GM10248 (cell line): ENCODE measurements at regions of chr1 and their contacts with region 1.

Region 1: DNA sequence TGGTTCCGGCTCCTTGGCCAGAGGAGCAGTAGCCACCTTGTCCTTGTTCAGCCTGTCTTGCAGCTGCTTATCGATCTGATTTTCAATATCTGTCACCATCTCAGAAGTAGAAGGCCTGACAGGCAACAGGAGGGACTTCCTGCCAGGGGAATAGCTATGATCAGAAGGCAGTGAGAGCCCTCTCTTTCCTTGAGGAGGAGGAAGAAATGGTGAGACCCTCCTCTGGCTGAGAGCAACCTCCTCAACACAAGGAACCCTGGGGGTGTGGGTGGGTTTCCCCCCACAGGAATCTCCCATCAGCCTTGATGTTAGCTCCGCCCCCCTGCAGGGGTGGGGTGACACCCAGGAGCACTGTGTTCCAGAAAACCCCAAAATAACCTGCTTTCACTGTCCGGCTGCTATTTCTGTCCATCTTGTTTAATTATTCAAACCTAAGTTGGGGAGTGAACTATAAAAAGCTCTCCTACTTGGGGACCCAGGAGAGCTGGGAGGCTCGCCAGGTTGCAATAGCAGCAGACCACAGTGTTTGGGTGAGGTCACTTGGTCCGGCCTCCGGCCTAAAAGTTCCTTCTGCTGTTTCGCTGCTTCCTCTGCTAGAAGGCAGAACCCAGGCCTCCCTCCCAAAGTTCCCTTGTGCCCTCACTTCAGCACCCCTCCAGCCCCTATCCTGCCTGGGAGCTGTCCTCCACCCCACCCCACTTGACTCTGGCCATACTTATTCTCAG is 7.8 kb upstream of the MEF2D start:
- DNase-seq: peak; percentile 70
- CTCF ChIP-seq: no peak

Region 2: GRCh38 chr1:156371553-156372264 is 136.6 kb before region 1 on chr1:
- CTCF ChIA-PET with region 1: no interaction called
- POLR2A ChIA-PET with region 1: no interaction called
- DNase-seq: no peak
- CTCF ChIP-seq: no peak

Region 3: GRCh38 chr1:156407344-156407743 is 101.0 kb before region 1 on chr1:
- CTCF ChIA-PET with region 1: no interaction called
- POLR2A ChIA-PET with region 1: no interaction called
- DNase-seq: no peak
- CTCF ChIP-seq: no peak

Region 4: DNA sequence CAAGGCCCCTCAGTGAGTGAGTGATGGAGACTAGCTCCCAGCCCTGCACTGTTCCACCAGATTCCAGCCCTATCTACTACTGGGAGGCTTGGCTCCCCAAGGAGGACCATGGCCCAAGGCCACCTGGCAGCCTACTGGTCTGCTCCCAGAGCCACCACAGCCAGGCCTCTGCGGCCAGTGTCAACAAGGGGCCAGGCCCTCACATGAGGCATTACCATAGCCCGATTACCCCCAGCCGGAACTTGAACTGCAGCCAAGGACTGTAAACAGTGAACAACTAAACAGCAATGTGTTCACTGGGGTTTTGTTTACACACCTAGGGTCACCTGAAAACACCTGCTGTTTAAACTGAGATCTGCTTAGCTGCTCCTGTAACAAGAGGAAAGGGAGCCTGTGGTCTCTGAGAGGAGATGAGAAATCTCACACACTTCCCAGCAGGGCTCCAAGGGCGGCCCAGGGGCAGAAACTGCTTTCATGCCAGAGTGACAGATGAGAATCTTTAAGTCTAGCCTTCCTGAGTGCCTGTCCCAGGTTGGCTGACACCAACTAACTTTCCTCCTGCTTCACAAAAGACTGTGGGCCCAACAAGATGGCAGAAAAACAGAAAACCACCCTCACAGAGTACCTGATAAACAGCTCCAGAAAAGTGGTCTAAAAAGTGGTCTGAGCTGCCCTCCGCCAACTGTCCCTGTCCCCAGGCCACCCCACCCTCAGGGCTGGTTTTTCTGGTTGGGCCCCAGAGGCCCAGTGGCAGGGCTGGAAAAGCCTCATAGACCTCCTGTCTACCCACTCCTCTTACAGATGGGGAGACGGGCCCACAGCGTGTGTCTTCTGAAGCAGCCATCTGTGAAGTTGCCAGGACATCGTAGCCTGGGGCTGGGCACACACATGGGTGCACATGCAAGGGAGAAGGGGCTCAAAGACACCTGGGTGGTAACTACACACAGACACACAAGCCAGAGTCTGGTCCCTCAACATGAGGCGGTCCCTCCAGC is 36.5 kb before region 1 on chr1:
- CTCF ChIA-PET with region 1: no interaction called
- POLR2A ChIA-PET with region 1: no interaction called
- DNase-seq: no peak
- CTCF ChIP-seq: no peak

Region 5: GRCh38 chr1:156524481-156524869 is 16.1 kb after region 1 on chr1:
- CTCF ChIA-PET with region 1: interaction called, 11 read pairs
- POLR2A ChIA-PET with region 1: interaction called, 3 read pairs
- DNase-seq: peak; percentile 44
- CTCF ChIP-seq: no peak

Region 6: DNA sequence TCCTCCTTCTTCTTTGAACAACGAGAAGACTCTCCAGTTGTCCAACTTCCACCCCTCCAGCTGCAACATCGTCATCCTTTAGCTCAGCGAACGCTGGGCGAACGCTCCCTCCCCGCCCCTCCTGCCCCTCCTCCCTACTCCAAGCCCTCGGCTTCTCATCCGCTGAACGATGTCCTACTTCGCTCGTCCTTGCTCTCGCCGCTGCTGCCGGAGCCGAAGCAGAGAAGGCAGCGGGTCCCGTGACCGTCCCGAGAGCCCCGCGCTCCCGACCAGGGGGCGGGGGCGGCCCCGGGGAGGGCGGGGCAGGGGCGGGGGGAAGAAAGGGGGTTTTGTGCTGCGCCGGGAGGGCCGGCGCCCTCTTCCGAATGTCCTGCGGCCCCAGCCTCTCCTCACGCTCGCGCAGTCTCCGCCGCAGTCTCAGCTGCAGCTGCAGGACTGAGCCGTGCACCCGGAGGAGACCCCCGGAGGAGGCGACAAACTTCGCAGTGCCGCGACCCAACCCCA is 133.5 kb after region 1 on chr1 and contains the start of gene BCAN:
- CTCF ChIA-PET with region 1: no interaction called
- POLR2A ChIA-PET with region 1: no interaction called
- DNase-seq: peak; percentile 66
- CTCF ChIP-seq: peak; percentile 8